GM12878 (cell line): ENCODE measurements at regions of chrX and their contacts with region 1.

Region 1: DNA sequence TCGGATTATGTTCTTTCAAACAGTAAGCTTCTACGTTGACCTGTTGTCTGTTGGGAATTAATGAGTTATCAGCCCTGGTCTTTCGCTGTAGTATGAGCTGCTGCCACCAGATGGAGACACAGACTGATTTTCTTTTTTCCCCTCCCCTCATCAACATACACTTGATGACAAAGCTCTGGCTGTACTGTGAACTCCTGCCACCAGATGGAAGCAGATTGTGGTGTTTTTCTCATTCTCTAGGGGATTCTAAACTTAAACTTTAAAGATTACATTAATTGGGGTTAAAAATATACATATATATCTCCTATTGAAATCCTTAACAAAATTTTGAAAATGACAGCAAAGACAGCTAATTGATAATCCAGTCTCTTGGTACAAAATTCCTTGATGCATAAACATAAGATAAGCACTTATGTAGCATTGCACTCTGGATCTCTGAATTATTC is 44.8 kb downstream of the SMS start:
- DNase-seq: peak; percentile 67
- ATAC-seq: peak; percentile 74
- H3K4me3 ChIP-seq: no peak overlapping the region
- H3K27ac ChIP-seq: no peak overlapping the region
- H3K4me1 ChIP-seq: peaks cover 4% of the 10 kb centered on the region; the same call in 1 of the 2 replicates
- H3K27me3 ChIP-seq: no peaks in the 10 kb centered on the region
- CTCF ChIP-seq: peak; percentile 86 to 99 (median 97); a peak in 5 of 6 replicates
- EP300 ChIP-seq: no peak
- POLR2A ChIP-seq: no peak
- RAD21 ChIP-seq: peak; percentile 95

Region 2: DNA sequence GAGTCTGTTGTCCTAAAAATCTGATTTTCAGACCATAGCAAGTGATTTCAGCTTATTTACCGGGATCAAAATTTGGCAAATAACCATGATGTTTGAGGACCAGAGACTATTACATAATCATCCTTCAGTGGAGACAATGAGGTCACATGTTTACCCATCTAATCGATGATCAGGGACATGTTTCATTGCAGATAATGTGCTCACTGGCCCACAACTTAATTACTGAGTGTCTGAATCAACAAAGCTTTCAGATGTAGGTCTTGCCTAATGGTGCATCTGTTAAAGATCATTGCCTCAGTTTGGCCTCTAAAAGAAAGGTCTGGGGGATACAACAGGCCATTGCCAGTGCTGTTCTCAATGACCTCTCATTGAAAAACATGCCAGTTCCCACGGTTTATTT is 284.4 kb before region 1 on chrX:
- CTCF ChIA-PET with region 1: no interaction called
- POLR2A ChIA-PET with region 1: no interaction called
- RAD21 ChIA-PET with region 1: no interaction called
- SMC1A ChIA-PET with region 1: no interaction called
- in situ Hi-C with region 1: no loop called
- intact Hi-C with region 1: no loop called
- DNase-seq: no peak
- ATAC-seq: no peak
- H3K4me3 ChIP-seq: no peak overlapping the region
- H3K27ac ChIP-seq: no peak overlapping the region
- H3K4me1 ChIP-seq: no peaks in the 10 kb centered on the region
- H3K27me3 ChIP-seq: no peaks in the 10 kb centered on the region
- CTCF ChIP-seq: no peak
- EP300 ChIP-seq: no peak
- POLR2A ChIP-seq: no peak
- RAD21 ChIP-seq: no peak

Region 3: DNA sequence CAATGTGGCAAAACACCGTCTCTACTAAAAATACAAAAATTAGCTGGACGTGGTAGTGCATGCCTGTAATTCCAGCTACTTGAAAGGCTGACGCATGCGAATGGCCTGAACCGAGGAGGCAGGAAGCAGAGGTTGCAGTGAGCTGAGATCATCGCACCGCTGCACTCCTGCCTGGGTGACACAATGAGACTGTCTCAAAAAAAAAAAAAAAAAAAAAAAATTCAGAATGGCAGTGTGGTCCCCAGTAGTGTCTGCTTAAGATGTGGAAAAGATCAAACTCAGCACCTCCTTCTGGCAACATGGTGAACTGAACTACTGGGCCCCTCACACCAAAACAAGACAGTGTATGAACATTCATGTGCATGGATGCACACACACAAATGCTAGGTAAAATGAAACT is 12.6 kb before region 1 on chrX:
- CTCF ChIA-PET with region 1: interaction called, 64 read pairs
- POLR2A ChIA-PET with region 1: no interaction called
- RAD21 ChIA-PET with region 1: interaction called, 14 read pairs
- SMC1A ChIA-PET with region 1: interaction called, 44 read pairs
- in situ Hi-C with region 1: no loop called
- intact Hi-C with region 1: no loop called
- DNase-seq: no peak
- ATAC-seq: peak; percentile 48
- H3K4me3 ChIP-seq: no peak overlapping the region
- H3K27ac ChIP-seq: no peak overlapping the region
- H3K4me1 ChIP-seq: 0 out of 2 replicates have a peak, but pooled peaks cover 4% of the 10 kb centered on the region
- H3K27me3 ChIP-seq: no peaks in the 10 kb centered on the region
- CTCF ChIP-seq: 0 out of 6 replicates have a peak, but pooled peaks of 1 of the 3 experiments have one; percentile 20
- EP300 ChIP-seq: no peak
- POLR2A ChIP-seq: no peak
- RAD21 ChIP-seq: 0 out of 2 replicates have a peak, but pooled peaks have one; percentile 7

Region 4: DNA sequence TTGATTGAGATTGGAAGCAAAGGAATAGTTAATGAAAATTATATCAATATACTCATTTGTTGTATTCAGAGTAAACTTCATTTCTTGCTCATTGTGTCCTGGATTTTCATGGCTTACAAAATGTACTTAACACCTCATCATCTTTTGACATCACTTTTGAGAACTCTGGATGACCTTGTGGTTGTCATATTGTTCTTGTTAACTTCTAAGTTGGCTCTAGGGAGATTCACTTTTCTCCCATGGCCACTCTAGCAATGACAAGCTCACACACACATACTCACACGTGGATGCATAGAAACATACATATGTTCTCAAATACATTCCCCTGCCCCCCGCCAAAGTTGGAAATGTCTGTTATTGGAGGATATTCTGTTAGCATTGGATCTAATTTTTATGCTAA is 62.1 kb after region 1 on chrX:
- CTCF ChIA-PET with region 1: interaction called, 17 read pairs
- POLR2A ChIA-PET with region 1: interaction called, 4 read pairs
- RAD21 ChIA-PET with region 1: interaction called, 6 read pairs
- SMC1A ChIA-PET with region 1: interaction called, 69 read pairs
- in situ Hi-C with region 1: no loop called
- intact Hi-C with region 1: no loop called
- DNase-seq: no peak
- ATAC-seq: peak; percentile 56
- H3K4me3 ChIP-seq: no peak overlapping the region
- H3K27ac ChIP-seq: no peak overlapping the region
- H3K4me1 ChIP-seq: no peaks in the 10 kb centered on the region
- H3K27me3 ChIP-seq: no peaks in the 10 kb centered on the region
- CTCF ChIP-seq: no peak
- EP300 ChIP-seq: no peak
- POLR2A ChIP-seq: no peak
- RAD21 ChIP-seq: no peak

Region 5: GRCh38 chrX:22081475-22082092 is 96.2 kb after region 1 on chrX:
- CTCF ChIA-PET with region 1: interaction called, 90 read pairs
- POLR2A ChIA-PET with region 1: interaction called, 4 read pairs
- RAD21 ChIA-PET with region 1: interaction called, 32 read pairs
- SMC1A ChIA-PET with region 1: interaction called, 48 read pairs
- in situ Hi-C with region 1: no loop called
- intact Hi-C with region 1: loop called (anchors 5 kb)
- DNase-seq: no peak
- ATAC-seq: peak; percentile 96
- H3K4me3 ChIP-seq: no peak overlapping the region
- H3K27ac ChIP-seq: no peak overlapping the region
- H3K4me1 ChIP-seq: no peaks in the 10 kb centered on the region
- H3K27me3 ChIP-seq: no peaks in the 10 kb centered on the region
- CTCF ChIP-seq: peak; percentile 56 to 79 (median 77)
- EP300 ChIP-seq: no peak
- POLR2A ChIP-seq: no peak
- RAD21 ChIP-seq: peak; percentile 53

Region 6: DNA sequence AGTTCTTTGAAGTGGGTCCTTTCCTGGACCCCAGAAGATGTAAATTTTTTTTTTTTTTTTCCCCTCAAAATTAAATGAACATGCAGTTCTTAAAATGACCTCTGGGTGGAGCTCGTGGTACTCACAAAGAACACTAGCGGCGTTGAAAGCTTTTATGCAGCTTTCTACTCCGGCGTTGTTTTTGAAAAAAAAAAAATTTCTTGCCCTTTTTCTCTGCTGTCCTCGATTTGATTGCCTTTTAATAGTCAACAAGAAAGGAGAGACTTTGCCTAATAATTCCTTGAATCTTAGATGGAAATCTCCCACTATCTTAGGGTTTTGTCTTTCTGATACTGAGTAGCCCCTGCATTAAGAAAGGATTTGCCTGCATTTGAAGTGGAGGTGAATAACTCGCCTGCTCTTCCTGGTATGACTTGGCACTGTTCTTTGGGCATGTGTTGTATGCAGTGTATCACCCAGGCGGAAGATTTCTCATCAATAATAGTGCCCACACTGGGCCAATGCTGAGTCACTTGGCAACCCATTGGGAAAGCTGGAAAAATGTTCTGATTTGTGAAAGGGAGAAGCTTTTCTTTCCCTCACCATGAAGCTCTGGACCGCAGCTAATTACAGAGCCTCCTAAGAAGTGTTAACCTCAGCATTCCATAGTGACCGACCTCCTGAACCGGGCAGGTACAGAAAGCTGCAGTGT is 150.8 kb after region 1 on chrX:
- CTCF ChIA-PET with region 1: interaction called, 102 read pairs
- POLR2A ChIA-PET with region 1: interaction called, 7 read pairs
- RAD21 ChIA-PET with region 1: interaction called, 75 read pairs
- SMC1A ChIA-PET with region 1: interaction called, 121 read pairs
- in situ Hi-C with region 1: no loop called
- intact Hi-C with region 1: loop called (anchors 2 kb)
- DNase-seq: no peak
- ATAC-seq: peak; percentile 43
- H3K4me3 ChIP-seq: no peak overlapping the region
- H3K27ac ChIP-seq: no peak overlapping the region
- H3K4me1 ChIP-seq: no peaks in the 10 kb centered on the region
- H3K27me3 ChIP-seq: no peaks in the 10 kb centered on the region
- CTCF ChIP-seq: peak; percentile 51 to 68 (median 68)
- EP300 ChIP-seq: no peak
- POLR2A ChIP-seq: no peak
- RAD21 ChIP-seq: peak; percentile 78

Region 7: GRCh38 chrX:22278374-22278773 is 293.0 kb after region 1 on chrX:
- CTCF ChIA-PET with region 1: interaction called, 16 read pairs
- POLR2A ChIA-PET with region 1: no interaction called
- RAD21 ChIA-PET with region 1: interaction called, 7 read pairs
- SMC1A ChIA-PET with region 1: interaction called, 9 read pairs
- in situ Hi-C with region 1: no loop called
- intact Hi-C with region 1: no loop called
- DNase-seq: no peak
- ATAC-seq: no peak
- H3K4me3 ChIP-seq: no peak overlapping the region
- H3K27ac ChIP-seq: no peak overlapping the region
- H3K4me1 ChIP-seq: no peaks in the 10 kb centered on the region
- H3K27me3 ChIP-seq: no peaks in the 10 kb centered on the region
- CTCF ChIP-seq: peak in 1 of 3 experiments; percentile 5; a peak in 1 of 6 replicates
- EP300 ChIP-seq: no peak
- POLR2A ChIP-seq: no peak
- RAD21 ChIP-seq: no peak

Region 8: DNA sequence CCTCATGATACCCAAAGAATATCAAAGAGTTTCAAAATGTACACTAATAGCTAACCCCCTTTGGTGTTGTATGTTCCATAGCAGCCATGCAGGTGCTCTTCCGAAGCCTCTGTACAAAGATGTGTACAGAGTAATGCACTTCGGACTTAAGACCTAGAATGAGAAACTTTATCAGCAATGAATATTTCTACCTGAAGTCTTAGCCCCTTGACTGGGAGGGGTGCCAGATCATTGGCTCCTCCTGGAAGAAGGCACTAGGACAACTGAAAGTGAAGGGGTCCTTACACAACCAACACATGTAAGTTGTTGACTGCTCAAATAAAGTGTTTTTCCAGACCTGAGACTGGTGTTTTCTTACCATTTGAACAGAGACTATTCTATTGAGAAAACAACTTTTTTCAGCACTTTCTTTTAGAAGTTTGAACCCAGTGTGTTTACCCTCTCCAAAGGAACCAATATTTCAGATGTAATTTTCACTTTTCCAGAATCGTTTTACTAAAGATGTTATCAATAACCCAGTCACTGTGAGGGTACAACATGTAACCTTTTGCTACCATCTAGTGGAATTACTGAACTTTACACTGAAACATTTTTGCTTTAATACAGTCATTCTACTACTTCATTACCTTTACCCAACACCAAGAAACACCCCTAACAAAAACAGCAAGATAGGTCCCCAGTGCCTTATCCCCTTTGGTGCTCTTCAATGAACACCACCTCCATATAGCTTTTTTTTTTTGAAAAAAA is 1648.7 kb after region 1 on chrX:
- CTCF ChIA-PET with region 1: no interaction called
- POLR2A ChIA-PET with region 1: no interaction called
- RAD21 ChIA-PET with region 1: no interaction called
- SMC1A ChIA-PET with region 1: no interaction called
- in situ Hi-C with region 1: no loop called
- intact Hi-C with region 1: loop called (anchors 10 kb)
- DNase-seq: no peak
- ATAC-seq: peak; percentile 64
- H3K4me3 ChIP-seq: no peak overlapping the region
- H3K27ac ChIP-seq: no peak overlapping the region
- H3K4me1 ChIP-seq: no peaks in the 10 kb centered on the region
- H3K27me3 ChIP-seq: no peaks in the 10 kb centered on the region; a peak in 1 of 4 replicates
- CTCF ChIP-seq: peak in 1 of 3 experiments; percentile 46; a peak in 1 of 6 replicates
- EP300 ChIP-seq: no peak
- POLR2A ChIP-seq: no peak
- RAD21 ChIP-seq: peak; percentile 35; the same call in 1 of the 2 replicates